Posterior cingulate gyrus (tissue), 11 donors: ENCODE measurements at regions of chr1 and their contacts with region 1.

Region 1: GRCh38 chr1:216499590-216500272 is 76.5 kb upstream of the USH2A start:
- DNase-seq: no peak

Region 2: GRCh38 chr1:216193839-216194439 is 305.8 kb before region 1 on chr1:
- intact Hi-C with region 1: no loop called
- DNase-seq: no peak

Region 3: DNA sequence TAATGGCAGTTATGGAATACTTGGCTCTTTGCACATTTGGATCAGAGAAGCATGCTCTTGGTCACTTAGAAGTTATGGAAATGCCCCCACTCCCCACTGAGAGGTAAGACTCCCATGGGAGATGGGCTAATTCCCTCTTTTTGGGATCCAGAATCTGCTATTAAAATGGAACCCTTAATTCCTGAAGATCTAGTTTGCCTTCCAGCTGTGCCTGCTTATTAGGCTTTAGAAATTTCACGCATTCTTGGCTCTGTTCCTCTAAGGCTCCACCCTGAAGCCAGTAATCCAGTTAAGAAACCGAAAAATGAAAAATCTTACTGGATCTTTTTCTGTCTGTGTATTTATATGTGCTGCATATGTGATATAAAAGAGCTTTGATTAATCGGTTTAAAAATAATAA is 153.2 kb before region 1 on chr1:
- intact Hi-C with region 1: no loop called
- DNase-seq: no peak

Region 4: DNA sequence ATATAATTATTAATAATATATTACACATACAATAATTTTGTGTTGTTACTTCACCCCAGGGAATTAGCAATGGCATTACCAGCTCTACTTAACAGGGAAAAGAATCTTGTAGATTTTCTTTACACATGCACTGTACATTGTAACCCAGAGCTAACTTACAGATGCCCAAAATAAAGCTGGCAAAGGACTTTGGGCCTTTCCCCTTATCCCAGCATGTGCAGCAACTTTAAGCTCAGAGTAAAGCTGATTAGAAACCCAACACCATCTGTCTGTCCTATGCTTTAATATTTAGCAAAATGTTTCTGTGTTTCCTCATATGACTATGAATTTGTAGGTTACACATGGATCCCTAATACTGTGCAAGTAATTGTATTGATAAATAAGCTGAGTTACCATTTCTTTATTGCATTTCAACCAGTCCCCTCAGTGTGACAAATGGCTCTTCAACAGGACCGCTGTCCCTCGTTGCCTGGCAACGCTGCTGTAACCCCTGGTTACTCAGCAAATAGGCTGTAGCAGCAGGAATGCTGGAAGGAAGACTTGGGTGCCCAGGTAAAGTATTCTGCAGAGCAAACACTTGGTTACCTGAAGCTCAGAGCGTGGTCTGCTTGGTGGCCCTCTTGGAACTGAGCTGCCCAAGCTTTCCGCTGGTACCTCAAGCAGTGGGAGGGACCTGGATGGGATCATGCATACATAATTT is 76.8 kb before region 1 on chr1 and contains the start of gene USH2A:
- intact Hi-C with region 1: no loop called
- DNase-seq: peak in 1 of 10 donors; percentile 32

Region 5: GRCh38 chr1:216475659-216476276 is 24.0 kb before region 1 on chr1:
- intact Hi-C with region 1: loop called (anchors 1 kb)
- DNase-seq: no peak

Region 6: GRCh38 chr1:216549796-216550195 is 50.1 kb after region 1 on chr1:
- intact Hi-C with region 1: no loop called
- DNase-seq: no peak